HEK293T (cell line): ENCODE measurements at regions of chr16 and their contacts with region 1.

Region 1: DNA sequence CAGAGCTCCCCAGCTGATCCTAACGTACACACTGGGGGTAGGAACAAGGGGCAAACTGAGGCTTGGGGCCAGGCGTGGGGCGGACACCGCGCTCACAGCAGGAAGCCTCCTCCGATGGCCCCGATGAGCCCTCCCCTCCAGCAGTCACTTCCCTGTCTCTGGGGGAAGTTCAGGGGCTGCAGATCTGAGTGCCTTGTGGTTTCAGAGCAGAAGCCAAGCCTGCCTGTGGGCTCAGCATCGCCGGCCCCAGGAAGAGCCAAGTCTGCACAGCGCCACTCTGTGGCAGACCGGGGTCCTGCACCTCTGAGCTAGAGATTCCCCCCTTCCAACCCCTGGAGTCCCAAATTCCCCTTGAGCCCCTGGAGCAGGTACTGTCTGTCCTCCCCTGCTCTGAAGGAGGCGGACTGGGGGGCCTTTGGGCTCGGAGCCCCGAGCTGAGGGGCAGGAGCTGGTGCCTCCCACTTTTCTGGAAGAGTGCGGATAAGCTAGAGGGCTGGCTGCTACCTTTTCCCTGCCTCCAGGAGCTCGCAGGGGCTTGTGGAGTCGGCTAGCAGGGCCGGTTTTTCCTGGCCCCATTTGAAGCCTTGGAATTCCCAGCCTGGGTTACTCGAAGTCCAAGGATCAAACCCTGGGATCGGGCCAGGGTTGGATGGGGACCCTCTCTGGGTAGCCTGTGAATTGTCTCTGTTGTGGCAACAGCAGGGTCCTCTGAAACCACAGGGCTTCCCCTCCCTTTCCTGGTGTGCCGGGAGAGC is 2.9 kb downstream of the GSE1 start:
- DNase-seq: peak; percentile 84

Region 2: DNA sequence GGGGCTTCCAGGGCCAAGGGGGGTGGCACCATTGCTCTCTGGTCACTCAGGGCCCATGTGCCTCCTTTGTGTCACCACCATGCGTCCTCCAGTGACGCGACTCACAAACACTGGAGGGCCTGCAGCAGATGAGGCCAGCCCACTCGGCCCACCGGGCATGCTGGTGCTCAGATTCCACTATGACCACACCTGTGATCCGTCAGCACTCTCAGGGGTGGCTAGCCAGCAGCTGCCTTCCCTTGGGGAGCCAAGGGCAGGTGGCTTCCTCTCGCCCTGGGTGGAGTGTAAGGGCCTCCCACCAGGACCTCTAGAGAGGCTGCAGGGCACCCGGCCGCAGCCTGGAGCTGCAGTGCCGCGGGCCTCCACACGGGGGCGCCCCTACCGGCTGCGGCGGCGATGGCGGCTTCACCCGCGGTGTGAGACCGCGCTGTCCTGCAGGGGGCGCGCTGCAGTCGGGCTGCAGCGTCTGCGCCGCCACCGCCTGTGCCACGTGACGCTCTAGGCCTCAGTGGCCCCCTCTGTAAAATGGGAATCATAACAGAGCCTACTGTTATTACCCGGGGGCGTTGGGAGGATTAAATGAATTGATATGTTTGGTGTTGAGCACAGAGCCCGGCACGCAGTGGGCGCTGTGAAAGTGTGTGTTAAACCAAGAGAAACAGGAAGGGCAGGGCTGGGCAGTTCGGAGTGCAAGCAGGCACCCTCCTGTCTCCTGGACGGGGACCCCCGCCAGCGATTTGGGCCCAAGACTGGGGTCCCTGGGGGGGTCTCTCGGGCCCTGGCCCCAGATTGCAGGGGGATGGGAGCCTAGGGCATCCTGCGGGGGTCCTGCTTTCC is 195.3 kb before region 1 on chr16:
- CTCF ChIA-PET with region 1: interaction called, 14 read pairs
- POLR2A ChIA-PET with region 1: no interaction called
- DNase-seq: peak; percentile 92

Region 3: GRCh38 chr16:85461814-85462713 is 154.0 kb before region 1 on chr16:
- CTCF ChIA-PET with region 1: interaction called, 10 read pairs
- POLR2A ChIA-PET with region 1: interaction called, 4 read pairs
- DNase-seq: peak; percentile 63

Region 4: DNA sequence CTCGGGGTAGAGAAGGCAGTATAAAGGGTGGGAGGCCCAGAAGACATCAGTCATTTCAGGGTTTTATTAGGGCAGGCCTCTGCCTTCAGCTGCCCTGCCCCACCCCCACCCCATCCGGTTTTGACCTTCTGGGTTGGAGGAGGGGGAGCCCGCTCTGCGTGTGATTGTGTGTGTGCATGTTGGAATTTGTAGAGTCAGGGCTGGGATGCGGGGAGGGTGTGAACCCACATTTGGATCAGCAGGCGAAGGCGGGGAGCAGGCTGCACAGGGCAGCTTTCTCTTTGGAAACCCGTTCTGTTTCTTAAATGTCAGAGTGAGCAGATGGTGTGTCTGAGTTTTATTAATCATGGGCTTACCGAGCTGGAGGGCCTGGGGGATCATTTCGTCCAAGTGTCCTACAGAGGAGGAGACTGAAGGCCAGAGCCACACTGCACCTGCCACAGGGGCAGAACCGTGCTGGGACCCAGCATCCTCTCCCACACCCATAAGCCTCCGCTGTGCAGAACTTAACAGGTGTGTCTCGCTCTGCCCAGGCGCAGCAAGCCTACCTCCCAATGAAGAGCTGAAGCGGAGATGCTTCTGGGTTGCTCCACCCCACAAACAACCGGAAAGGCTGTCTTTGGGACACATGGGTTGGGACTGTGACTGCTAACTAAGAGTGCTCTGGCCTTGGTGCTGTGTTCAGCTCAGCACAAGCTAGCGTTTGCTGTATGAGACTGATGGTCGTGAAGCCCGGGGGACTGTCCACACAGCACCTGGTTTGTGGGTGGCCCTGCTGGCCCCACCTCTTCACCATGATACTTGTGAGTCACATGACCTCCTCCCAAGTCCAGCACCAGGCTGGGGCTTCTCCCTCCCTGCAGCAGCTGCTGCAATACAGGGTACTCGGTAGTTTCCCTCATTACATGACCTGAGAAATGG is 73.8 kb before region 1 on chr16:
- CTCF ChIA-PET with region 1: no interaction called
- POLR2A ChIA-PET with region 1: no interaction called
- DNase-seq: no peak

Region 5: DNA sequence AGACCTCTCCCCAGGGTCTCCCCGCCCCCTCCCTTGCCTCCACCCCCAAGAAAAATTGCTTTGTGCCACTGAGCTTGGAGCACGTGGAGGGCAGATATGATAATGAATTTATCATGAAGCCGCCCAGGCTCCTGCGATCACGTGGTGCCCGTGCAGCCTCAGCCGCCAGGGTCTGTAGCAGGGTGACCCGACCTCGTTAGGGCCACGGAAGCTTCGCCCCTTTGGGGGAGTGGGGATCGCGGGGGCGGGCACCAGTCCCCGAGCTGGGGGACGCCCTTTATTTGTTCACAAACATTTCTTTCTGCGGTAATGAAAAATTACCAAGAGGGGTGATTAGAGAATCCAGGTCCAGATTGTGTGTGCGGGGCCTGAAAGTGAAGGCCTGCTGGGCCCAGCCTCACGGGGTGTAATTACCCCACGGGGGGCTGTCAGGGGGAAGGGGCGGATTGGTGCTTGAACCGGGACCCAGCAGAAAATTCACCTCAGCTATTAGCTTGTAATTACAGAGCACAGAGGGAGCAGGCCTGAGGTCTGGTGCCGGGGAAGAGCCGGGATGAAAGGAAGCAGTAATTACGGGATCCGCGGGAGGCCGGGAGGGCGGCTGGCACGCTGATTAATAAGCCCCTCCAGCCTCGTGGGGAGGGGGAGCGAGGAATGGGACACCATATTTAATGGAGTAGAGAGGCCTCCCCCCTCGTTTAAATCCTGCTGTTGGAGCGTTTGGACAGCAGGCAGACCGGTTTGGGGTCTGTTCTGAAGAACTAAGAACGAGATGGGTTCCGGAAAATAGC is 10.4 kb after region 1 on chr16:
- CTCF ChIA-PET with region 1: interaction called, 19 read pairs
- POLR2A ChIA-PET with region 1: interaction called, 8 read pairs
- DNase-seq: peak; percentile 48

Region 6: GRCh38 chr16:85642762-85643358 is 26.8 kb after region 1 on chr16:
- CTCF ChIA-PET with region 1: no interaction called
- POLR2A ChIA-PET with region 1: no interaction called
- DNase-seq: no peak

Region 7: DNA sequence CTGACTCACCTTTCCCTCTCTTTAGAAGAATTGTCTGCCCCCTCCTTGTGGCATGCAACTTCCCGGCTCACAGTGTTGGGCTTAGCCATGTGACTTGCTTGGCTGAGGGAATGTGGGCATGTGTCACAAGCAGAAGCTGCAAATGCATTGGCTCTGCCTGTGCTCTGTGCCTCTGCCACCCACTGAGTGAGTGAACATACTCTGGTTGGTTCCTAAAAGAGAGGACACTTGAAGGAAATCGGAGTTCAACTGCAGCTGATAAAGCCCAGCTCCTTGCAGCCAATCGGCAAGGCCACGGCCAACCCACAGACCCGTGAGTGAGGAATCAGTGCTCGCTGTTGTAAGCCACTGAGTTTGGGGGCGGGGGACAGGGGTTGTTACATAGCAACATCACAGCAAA is 83.6 kb after region 1 on chr16:
- CTCF ChIA-PET with region 1: no interaction called
- POLR2A ChIA-PET with region 1: no interaction called
- DNase-seq: no peak

Region 8: GRCh38 chr16:85812031-85812793 is 196.2 kb after region 1 on chr16:
- CTCF ChIA-PET with region 1: no interaction called
- POLR2A ChIA-PET with region 1: no interaction called
- DNase-seq: no peak